Endothelial cell of umbilical vein (primary cell): ENCODE measurements at regions of chr3 and their contacts with region 1.

Region 1: DNA sequence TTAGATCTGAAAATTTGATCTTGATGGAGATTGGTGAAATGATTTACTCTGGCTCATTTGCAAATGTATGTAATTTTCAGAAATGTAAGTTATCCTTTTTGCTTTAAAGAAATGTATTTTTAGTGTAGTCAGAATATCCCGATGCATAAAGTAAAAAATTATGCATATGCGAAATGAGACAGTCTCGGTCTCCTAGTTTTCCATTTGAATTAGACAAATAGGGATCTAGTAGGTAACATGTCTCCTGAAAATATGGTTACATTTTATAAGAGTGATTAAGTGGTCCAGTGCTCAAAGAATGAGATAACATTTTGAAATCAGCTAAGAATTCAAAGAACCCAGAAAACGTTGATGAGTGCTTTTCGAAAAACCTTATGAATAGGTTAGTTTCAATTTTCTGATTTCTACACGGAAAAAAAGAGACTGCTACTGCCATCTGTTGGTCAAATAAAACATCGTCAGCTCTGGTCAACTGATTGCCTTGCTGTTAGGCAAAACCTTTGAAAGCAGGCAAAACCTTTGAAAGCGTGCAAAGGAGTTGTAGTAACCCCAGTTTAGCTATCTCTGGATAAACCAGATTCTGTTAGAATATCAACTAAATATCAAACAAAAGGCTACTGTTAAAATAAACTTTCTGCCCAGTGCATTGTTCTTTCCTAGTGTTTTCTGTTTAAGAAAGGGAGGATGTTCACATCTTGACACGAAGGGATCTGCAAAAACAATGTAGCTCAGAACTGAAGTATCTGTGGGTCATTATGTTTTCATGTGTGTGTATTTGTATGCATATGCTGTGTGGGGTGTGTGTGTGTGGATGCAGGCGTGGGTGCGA is 59.3 kb upstream of the CHMP2B start:
- DNase-seq: peak; percentile 55
- H3K4me3 ChIP-seq: peak overlapping the region in 1 of 3 experiments; percentile 44
- H3K27ac ChIP-seq: no peak overlapping the region
- H3K4me1 ChIP-seq: no peaks in the 10 kb centered on the region
- H3K27me3 ChIP-seq: peaks cover 2 to 7% of the 10 kb centered on the region in 2 experiments
- CTCF ChIP-seq: peak; percentile 49 to 52
- POLR2A ChIP-seq: no peak

Region 2: GRCh38 chr3:86702381-86702958 is 465.4 kb before region 1 on chr3:
- CTCF ChIA-PET with region 1: interaction called, 5 read pairs
- POLR2A ChIA-PET with region 1: no interaction called
- dilution Hi-C with region 1: no loop called
- intact Hi-C with region 1: loop called (anchors 2 kb)
- DNase-seq: peak; percentile 1
- H3K4me3 ChIP-seq: no peak overlapping the region
- H3K27ac ChIP-seq: no peak overlapping the region
- H3K4me1 ChIP-seq: no peaks in the 10 kb centered on the region
- H3K27me3 ChIP-seq: no peaks in the 10 kb centered on the region
- CTCF ChIP-seq: peak; percentile 13 to 21
- POLR2A ChIP-seq: no peak

Region 3: GRCh38 chr3:86774082-86774691 is 393.7 kb before region 1 on chr3:
- CTCF ChIA-PET with region 1: interaction called, 72 read pairs
- POLR2A ChIA-PET with region 1: no interaction called
- dilution Hi-C with region 1: no loop called
- intact Hi-C with region 1: loop called (anchors 1 kb)
- DNase-seq: peak; percentile 12
- H3K4me3 ChIP-seq: no peak overlapping the region
- H3K27ac ChIP-seq: no peak overlapping the region
- H3K4me1 ChIP-seq: no peaks in the 10 kb centered on the region
- H3K27me3 ChIP-seq: no peaks in the 10 kb centered on the region
- CTCF ChIP-seq: peak; percentile 11
- POLR2A ChIP-seq: no peak

Region 4: DNA sequence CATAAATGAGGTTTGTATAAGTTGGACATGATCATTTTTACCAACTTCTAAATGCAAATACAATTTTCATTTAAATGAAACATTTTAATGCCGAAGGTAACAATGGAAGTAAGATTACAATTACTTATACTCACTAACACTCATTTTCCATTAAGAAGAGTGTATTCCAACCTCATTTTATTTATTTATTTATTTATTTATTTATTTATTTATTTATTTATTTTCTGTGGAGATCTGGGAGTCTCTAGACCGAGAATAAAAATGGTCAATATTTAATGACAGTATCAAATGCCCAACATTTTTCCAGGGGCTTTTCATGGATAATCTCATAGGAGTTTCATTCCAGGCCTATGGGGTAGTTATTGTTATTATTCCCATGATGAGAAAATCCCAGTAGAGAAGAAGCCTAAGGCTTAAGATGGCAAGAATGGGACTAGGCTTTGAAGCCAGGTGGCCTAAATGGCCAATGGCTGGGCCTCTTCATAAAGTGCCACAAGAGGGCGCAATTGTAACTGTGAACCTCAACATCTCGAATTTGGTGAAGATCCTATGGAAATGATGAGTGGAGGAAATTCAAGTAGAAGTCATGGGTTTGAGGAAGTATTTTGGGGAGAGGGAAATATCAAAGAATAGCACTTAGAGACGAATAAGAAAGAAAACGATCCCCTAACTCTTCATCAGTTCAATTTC is 198.2 kb before region 1 on chr3:
- CTCF ChIA-PET with region 1: interaction called, 3 read pairs
- POLR2A ChIA-PET with region 1: no interaction called
- dilution Hi-C with region 1: no loop called
- intact Hi-C with region 1: loop called (anchors 1 kb)
- DNase-seq: peak; percentile 38
- H3K4me3 ChIP-seq: no peak overlapping the region
- H3K27ac ChIP-seq: no peak overlapping the region
- H3K4me1 ChIP-seq: peaks cover 2% of the 10 kb centered on the region
- H3K27me3 ChIP-seq: no peaks in the 10 kb centered on the region
- CTCF ChIP-seq: peak; percentile 57 to 73
- POLR2A ChIP-seq: no peak

Region 5: DNA sequence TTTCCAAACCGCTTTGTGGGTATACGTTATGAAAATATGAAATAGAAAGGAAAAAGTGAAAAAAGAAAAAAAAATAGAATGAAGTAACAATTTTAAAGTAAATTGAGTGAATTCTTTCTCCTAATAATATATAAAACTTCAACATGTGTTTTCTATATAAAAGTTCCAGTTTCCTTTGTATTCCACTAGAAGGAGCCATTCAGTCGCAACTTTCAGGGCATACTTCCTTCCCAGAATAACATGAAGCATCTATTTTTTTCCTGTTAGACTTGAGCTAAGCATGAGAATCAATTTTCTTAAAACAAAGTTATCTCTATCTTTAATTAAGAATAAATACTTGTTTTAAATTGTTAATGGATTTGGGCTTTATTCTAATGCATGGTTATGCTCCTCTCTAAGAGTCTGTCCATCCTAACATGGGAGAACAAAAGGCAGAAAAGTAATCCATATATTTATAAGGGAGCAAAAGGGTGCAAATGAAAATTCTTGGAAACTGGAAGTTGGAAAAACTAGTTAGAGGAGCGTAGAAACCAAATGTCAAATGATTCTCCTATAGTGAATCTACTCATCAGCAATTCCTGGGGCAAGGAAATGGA is 160.9 kb before region 1 on chr3:
- CTCF ChIA-PET with region 1: interaction called, 5 read pairs
- POLR2A ChIA-PET with region 1: no interaction called
- dilution Hi-C with region 1: no loop called
- intact Hi-C with region 1: loop called (anchors 5 kb)
- DNase-seq: no peak
- H3K4me3 ChIP-seq: no peak overlapping the region
- H3K27ac ChIP-seq: no peak overlapping the region
- H3K4me1 ChIP-seq: no peaks in the 10 kb centered on the region
- H3K27me3 ChIP-seq: peaks cover 0 to 5% of the 10 kb centered on the region in 2 experiments
- CTCF ChIP-seq: no peak
- POLR2A ChIP-seq: no peak

Region 6: DNA sequence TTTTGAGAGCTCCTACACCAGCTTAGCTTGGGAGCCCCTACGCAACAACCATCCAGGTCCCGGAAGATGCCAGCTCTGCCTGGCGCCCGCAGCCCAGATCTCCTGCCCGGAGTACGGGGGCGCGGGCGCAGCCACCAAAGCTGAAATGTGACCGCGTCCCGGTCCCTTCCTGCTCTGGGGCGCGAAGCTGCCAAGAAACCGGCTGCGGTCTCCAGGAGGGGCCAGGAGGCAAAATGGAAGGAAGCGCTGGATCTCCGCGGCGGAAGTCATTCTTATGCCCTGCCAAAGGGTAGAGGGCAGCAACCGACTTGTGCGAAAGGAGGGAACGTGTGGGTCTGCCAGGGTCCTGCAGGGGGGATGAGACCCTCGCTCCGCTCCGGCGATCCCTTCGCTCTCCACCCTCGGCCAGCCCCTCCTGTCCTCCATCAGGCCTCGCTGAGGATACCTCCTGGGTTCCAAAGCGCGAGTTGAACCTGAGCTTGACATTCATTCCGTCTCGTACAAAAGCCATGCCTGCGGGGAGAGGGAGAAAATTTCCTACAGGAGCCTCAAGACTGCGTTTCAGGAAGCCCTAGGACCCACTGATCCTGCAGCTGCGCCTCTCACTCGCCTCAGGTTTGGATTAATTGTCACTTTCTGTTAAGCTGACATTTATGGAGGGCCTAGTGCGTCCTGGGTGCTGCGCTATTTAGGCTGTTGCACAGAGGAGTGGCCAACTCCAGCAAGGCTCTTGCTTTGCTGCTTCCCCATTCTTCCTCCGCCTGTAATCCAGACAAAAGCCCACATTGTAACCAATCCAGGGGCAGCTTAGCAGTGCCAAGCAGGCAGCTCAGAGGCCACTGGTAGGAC is 78.6 kb before region 1 on chr3:
- CTCF ChIA-PET with region 1: interaction called, 3 read pairs
- POLR2A ChIA-PET with region 1: no interaction called
- dilution Hi-C with region 1: no loop called
- intact Hi-C with region 1: loop called (anchors 5 kb)
- DNase-seq: peak; percentile 3
- H3K4me3 ChIP-seq: peak overlapping the region; percentile 30 to 56 (median 33)
- H3K27ac ChIP-seq: no peak overlapping the region
- H3K4me1 ChIP-seq: peaks cover 6% of the 10 kb centered on the region
- H3K27me3 ChIP-seq: no peaks in the 10 kb centered on the region
- CTCF ChIP-seq: no peak
- POLR2A ChIP-seq: no peak

Region 7: DNA sequence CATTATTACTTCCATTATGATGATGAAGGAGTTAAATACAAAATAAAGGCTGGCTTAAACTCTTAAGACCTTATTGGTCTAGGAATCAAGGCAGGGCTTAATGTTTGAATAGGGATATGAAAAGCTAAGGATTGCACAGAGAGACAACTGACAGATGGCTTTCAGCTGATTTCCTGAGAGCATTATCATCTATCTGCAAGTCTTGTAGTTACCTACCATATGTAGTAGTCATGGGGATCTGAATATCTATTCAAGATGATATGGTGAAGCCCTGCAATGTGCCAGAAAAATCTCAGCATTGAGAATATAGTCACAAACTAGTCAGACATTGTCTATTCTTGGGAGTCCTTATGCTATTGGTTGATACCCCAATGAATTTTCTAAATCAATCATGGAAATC is 11.8 kb after region 1 on chr3:
- CTCF ChIA-PET with region 1: interaction called, 15 read pairs
- POLR2A ChIA-PET with region 1: no interaction called
- dilution Hi-C with region 1: no loop called
- intact Hi-C with region 1: no loop called
- DNase-seq: no peak
- H3K4me3 ChIP-seq: no peak overlapping the region
- H3K27ac ChIP-seq: no peak overlapping the region
- H3K4me1 ChIP-seq: no peaks in the 10 kb centered on the region
- H3K27me3 ChIP-seq: no peaks in the 10 kb centered on the region
- CTCF ChIP-seq: no peak
- POLR2A ChIP-seq: no peak